Endothelial cell of umbilical vein (primary cell): ENCODE measurements at regions of chr19 and their contacts with region 1.

Region 1: GRCh38 chr19:13784731-13785452 is 10.4 kb upstream of the ZSWIM4 start:
- DNase-seq: peak; percentile 62
- H3K4me3 ChIP-seq: no peak overlapping the region
- H3K27ac ChIP-seq: no peak overlapping the region
- H3K4me1 ChIP-seq: peaks cover 27% of the 10 kb centered on the region
- H3K27me3 ChIP-seq: no peaks in the 10 kb centered on the region
- CTCF ChIP-seq: peak; percentile 67 to 85
- POLR2A ChIP-seq: no peak

Region 2: DNA sequence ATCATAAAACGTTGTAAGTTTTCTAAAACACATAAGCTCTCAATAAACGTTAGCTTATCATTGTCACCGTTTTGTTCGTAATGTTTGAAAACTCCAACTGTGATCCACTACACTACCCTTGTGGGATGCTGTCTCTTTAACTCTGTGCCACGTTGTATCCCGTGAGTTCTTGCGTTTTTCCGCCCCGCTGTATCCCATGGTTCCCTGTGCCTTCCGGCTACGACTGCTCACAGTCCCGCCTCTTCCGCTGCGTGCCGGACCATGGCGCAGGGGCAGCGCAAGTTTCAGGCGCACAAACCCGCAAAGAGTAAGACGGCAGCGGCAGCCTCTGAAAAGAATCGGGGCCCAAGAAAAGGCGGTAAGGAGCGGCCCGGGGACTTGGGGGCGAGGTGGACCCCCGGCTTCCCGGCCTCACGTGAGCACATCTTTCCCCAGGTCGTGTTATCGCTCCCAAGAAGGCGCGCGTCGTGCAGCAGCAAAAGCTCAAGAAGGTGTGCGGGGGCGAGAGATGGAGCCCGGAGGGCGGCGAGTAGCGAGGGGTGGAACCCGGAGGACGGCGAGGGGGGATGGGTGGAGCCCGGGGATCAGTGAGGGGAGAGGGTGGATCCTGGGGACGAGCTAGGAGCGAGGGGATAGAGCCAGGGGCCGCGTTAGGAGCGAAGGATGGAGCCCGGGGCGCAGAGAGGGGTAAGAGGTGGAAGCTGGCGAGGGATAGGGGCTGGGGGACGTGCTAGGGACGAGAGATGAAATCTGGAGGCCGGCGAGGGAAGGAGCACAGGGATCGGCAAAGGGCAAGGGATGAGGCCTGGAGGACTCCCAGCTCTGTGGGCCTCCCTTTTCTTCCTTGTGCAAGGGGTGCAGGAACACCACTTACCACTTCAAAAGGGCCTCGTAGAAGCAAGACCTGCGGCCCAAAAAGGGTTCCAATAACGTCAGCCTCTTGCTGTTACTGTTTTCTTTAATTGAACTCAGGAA is 10.4 kb before region 1 on chr19 and contains the start of gene C19orf53:
- CTCF ChIA-PET with region 1: interaction called, 19 read pairs
- POLR2A ChIA-PET with region 1: interaction called, 3 read pairs
- dilution Hi-C with region 1: no loop called
- intact Hi-C with region 1: no loop called
- DNase-seq: peak; percentile 95
- H3K4me3 ChIP-seq: peak within 1 kb of the TSS; percentile 63 to 77 (median 75)
- H3K27ac ChIP-seq: peak within 1 kb of the TSS; percentile 62
- H3K4me1 ChIP-seq: peaks cover 9% of the 10 kb centered on the region
- H3K27me3 ChIP-seq: no peaks in the 10 kb centered on the region
- CTCF ChIP-seq: no peak
- POLR2A ChIP-seq: peak; percentile 86
- total RNA-seq, gene C19orf53: 113 and 126 TPM in 2 replicates

Region 3: DNA sequence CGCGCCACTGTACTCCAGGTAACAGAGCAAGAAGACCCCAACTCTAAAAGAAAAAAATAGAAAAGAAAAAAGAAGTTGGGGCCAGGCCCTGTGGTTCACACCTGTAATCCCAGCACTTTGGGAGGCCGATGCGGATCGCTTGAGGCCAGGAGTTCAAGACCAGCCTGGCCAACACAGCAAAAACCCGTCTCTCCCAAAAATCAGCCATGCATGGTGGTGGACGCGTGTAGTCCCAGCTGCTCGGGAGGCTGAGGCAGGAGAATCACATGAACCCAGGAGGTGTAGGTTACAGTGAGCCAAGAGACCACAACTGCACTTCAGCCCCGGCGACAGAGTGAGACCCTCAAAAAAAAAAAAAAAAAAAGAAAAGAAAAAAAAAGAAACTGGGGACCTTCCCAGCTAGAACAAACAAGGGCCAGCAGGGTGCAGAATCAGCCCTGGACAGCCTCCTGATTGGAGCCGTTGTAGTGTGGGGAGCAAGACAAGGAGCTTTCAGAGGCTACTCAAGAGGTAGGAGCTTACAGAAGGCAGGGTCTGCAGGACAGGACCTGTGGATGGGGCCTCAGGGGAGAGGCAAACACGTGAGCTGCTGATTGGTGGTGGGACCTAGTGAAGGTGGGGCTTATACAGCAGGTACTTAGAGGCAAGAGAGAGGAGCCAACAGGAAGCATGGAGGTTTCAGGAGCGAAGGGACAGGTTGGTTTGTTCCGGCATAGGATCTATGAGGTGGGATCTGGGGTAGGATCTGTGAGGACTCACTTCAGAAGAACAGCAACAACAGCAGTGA is 42.5 kb after region 1 on chr19:
- CTCF ChIA-PET with region 1: interaction called, 7 read pairs
- POLR2A ChIA-PET with region 1: interaction called, 3 read pairs
- dilution Hi-C with region 1: no loop called
- intact Hi-C with region 1: loop called (anchors 1 kb)
- DNase-seq: no peak
- H3K4me3 ChIP-seq: no peak overlapping the region
- H3K27ac ChIP-seq: no peak overlapping the region
- H3K4me1 ChIP-seq: no peaks in the 10 kb centered on the region
- H3K27me3 ChIP-seq: no peaks in the 10 kb centered on the region
- CTCF ChIP-seq: no peak
- POLR2A ChIP-seq: no peak

Region 4: GRCh38 chr19:13839130-13839937 is 54.4 kb after region 1 on chr19:
- CTCF ChIA-PET with region 1: interaction called, 12 read pairs
- POLR2A ChIA-PET with region 1: interaction called, 9 read pairs
- dilution Hi-C with region 1: no loop called
- intact Hi-C with region 1: loop called (anchors 1 kb)
- DNase-seq: peak; percentile 87
- H3K4me3 ChIP-seq: peak overlapping the region in 2 of 3 experiments; percentile 79 to 82
- H3K27ac ChIP-seq: peak overlapping the region; percentile 94
- H3K4me1 ChIP-seq: peaks cover 39% of the 10 kb centered on the region
- H3K27me3 ChIP-seq: no peaks in the 10 kb centered on the region
- CTCF ChIP-seq: no peak
- POLR2A ChIP-seq: peak; percentile 77

Region 5: GRCh38 chr19:14222886-14223285 is 438.0 kb after region 1 on chr19:
- CTCF ChIA-PET with region 1: no interaction called
- POLR2A ChIA-PET with region 1: no interaction called
- dilution Hi-C with region 1: no loop called
- intact Hi-C with region 1: no loop called
- DNase-seq: no peak
- H3K4me3 ChIP-seq: no peak overlapping the region
- H3K27ac ChIP-seq: no peak overlapping the region
- H3K4me1 ChIP-seq: no peaks in the 10 kb centered on the region
- H3K27me3 ChIP-seq: no peaks in the 10 kb centered on the region
- CTCF ChIP-seq: no peak
- POLR2A ChIP-seq: no peak